RWPE1 (cell line): ENCODE measurements at regions of chr1 and their contacts with region 1.

Region 1: GRCh38 chr1:205591522-205592351 is 40.1 kb downstream of the ELK4 start:
- DNase-seq: peak; percentile 98
- H3K27ac ChIP-seq: peak overlapping the region; percentile 79
- CTCF ChIP-seq: peak; percentile 98

Region 2: GRCh38 chr1:205523891-205524793 is 67.6 kb before region 1 on chr1:
- CTCF ChIA-PET with region 1: interaction called, 29 read pairs
- POLR2A ChIA-PET with region 1: no interaction called
- DNase-seq: peak; percentile 91
- H3K27ac ChIP-seq: peak overlapping the region; percentile 19; the same call in 1 of the 2 replicates
- CTCF ChIP-seq: peak; percentile 75

Region 3: GRCh38 chr1:205543411-205544301 is 48.1 kb before region 1 on chr1:
- CTCF ChIA-PET with region 1: interaction called, 12 read pairs
- POLR2A ChIA-PET with region 1: no interaction called
- DNase-seq: peak; percentile 83
- H3K27ac ChIP-seq: peak overlapping the region; percentile 77
- CTCF ChIP-seq: no peak

Region 4: GRCh38 chr1:205613288-205613687 is 21.6 kb after region 1 on chr1:
- CTCF ChIA-PET with region 1: interaction called, 12 read pairs
- POLR2A ChIA-PET with region 1: no interaction called
- DNase-seq: no peak
- H3K27ac ChIP-seq: no peak overlapping the region
- CTCF ChIP-seq: no peak

Region 5: GRCh38 chr1:205645519-205645918 is 53.8 kb after region 1 on chr1:
- CTCF ChIA-PET with region 1: interaction called, 22 read pairs
- POLR2A ChIA-PET with region 1: interaction called, 5 read pairs
- DNase-seq: no peak
- H3K27ac ChIP-seq: no peak overlapping the region
- CTCF ChIP-seq: no peak

Region 6: DNA sequence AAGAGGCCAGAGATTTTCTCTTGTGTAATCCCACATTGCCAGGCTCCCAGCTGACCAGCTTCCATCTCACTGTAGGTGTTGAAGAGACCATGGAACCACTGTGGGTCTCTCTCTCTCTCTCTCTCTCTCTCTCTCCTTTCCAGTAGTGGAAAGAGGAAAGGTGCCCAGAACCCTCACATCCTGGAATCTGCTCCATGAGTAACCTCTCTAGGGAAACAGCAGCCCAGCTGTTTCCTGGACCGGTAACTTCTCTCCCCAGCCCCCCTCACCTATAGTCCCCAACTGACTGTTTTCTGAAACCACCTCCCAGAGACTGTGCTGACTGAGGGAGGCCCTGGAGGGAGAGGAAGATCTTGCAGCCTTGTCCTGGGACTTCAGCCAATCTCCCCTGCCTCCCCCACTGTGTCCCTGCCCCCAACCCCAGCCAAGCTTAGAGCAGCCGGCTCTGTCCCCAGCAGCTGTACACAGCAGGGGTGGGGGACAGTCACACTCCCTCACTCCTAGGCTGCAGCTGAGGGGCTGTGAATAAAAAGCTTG is 109.2 kb after region 1 on chr1:
- CTCF ChIA-PET with region 1: interaction called, 10 read pairs
- POLR2A ChIA-PET with region 1: no interaction called
- DNase-seq: no peak
- H3K27ac ChIP-seq: 0 out of 2 replicates have a peak overlapping the region, but pooled peaks have one; percentile 3
- CTCF ChIP-seq: no peak

Region 7: DNA sequence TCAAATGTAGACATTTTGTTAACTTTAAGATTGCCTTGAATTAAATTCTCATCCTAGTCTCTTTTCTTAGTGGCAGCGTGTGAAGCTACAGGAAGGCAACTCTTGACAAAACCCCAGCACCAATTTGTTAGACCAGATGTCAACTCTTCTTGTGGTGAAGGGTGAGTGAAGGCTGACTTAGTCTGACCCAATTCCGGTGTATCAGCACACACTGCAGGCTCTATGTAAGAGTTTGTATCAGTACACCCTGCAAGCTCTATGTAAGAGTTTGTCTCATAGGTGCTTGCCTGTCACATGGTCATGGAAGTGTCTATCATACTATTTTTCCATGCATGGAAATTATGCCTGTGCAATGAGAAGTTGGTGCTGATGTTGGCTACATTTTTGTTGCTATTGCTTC is 1879.2 kb after region 1 on chr1:
- CTCF ChIA-PET with region 1: no interaction called
- POLR2A ChIA-PET with region 1: no interaction called
- DNase-seq: no peak
- H3K27ac ChIP-seq: no peak overlapping the region
- CTCF ChIP-seq: no peak